Dendritic cell treated with granulocyte-macrophage colony-stimulating factor and Interleukin-4, amounts not matched to agents 40 ng/mL and 50 ng/mL, for 4 days (primary cell): ENCODE measurements at regions of chr22 and their contacts with region 1.

Region 1: DNA sequence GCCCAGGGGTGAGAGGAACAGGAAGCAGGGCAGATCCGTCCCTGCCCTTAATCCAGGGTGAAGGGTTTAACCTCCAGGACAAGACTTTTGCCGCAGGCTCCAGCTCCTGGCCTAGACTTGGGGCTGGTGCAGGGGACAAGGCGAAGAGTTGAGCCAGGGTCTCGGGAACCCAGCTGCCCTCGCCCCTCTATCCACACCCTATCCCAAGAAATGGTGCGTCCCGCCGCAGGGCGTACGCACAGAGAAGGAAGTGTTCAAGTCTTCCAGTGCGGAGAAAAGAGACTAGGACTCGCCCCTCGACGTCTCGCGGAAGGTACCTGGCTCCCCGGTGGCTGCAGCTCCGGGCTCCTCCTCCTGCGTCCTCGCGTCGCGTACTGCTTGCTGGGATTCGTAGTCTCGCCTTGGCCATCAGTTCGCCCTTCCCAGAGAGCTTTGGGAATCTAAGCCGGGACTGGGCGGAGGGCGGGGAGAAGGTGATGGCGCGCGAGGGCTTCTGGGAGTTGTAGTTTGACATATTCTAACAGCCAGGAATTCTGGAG is at the start of gene ZMAT5:
- H3K4me3 Mint-ChIP-seq: peak within 1 kb of the TSS; percentile 98
- H3K27ac Mint-ChIP-seq: peak within 1 kb of the TSS; percentile 96
- H3K4me1 Mint-ChIP-seq: peaks cover 36% of the 10 kb centered on the region
- H3K27me3 Mint-ChIP-seq: no peaks in the 10 kb centered on the region

Region 2: DNA sequence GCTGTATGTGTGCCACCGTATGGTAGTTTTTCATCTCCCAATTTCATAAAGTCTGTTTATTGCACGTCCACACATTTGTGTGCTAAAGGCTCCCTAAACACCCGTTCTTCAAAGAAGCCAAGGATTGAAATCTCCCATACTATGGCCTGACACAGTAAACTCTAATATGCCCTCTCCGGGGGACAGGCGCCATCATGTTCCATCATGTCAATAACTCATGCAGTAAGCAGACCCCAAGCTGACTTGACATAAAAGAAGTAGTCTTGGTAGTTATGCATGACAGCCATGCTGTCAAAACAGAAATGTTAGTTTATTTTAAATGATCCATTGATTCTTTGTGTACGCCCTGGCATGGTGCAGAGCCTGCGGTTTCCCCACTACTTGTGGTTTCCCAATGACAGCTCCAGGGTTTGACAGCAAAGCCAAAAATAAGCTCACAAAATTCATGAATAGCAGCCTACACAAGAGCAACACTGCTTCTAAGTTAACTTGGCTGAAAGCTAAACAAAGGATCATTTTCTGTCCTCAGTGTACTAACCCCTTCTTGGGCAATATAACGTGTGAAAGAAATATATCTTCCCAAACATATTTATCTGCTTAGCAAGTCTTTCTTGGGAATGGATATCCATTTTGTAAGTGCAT is 103.4 kb before region 1 on chr22:
- intact Hi-C with region 1: no loop called
- H3K4me3 Mint-ChIP-seq: no peak overlapping the region
- H3K27ac Mint-ChIP-seq: no peak overlapping the region
- H3K4me1 Mint-ChIP-seq: peaks cover 5% of the 10 kb centered on the region
- H3K27me3 Mint-ChIP-seq: no peaks in the 10 kb centered on the region

Region 3: DNA sequence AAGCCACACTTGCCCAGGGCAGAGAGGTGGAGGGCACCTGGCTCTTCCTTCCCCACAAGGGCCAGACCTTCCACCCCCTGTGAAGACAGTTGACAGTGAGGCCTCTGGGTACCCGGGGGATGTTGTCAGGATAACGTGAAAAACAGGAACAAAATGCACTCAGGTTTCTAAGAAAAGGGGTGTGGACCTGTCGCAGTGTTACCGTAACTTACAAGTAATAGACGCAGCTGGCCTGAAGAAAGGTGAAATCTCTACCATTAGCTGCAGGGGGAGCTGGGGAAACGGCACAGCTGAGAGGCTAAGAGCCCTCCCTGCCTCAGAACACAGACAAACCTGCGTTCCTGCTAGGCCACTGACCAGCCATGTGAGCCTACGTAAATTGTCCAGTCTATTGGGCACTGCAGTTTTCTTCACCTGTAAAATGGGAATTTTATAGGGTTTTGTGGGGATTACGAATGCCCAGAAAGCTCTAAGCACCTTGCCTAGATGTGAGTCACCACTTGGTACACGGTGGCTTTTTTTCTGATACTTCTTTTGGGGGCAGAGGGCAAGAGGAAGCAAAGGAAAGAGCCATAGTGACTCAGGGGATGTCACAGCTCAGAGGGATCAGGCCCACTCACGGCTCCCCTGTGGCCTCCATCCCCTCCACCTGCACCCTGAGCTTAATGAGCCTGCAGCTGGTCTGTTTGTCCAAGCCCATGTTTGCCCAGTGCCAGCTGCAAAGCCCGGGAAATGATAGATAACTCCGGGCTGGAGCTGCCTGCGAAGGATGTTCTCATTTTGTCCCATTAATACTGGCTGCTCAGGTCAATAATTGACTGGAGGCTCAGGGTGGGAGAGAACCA is 65.3 kb before region 1 on chr22:
- intact Hi-C with region 1: no loop called
- H3K4me3 Mint-ChIP-seq: no peak overlapping the region
- H3K27ac Mint-ChIP-seq: no peak overlapping the region
- H3K4me1 Mint-ChIP-seq: peaks cover 17% of the 10 kb centered on the region
- H3K27me3 Mint-ChIP-seq: peaks cover 29% of the 10 kb centered on the region

Region 4: DNA sequence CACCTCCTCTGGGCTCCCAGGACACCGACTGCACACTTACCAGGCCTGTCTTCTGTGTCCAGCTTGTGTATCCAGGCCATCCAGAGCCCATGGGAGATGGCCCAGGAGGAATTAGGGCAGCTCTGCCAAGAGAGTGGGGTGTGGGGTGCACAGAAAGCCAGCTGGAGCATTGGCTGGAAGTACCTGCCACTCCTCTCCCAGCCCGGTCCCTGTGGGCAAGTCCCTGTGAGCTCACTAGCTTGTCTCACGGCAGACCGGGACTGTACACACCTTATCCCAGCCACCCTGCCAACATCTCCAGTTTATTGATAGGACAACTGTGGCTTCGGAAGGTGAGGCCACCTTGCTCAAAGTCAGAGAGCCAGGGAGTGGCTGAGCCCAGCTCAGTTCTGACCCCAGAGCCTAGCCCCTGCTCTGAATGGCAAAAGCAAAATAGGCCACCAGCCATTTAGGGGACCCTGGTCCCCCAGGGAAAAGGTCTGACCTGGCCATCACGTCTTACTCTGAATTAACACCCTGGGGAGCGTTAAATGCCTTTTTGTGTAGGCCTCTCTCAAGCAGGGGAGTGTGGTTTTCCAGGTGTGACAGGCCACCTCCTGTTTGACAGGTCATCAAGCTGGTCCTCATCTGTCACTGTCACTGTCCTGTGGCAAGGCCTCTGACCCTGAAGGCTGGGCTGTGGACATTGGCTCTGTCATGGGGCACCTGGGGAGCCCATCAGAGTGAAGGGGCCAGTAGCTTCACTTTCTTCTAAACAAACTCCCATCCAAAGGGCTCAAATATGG is 15.6 kb after region 1 on chr22:
- intact Hi-C with region 1: no loop called
- H3K4me3 Mint-ChIP-seq: no peak overlapping the region
- H3K27ac Mint-ChIP-seq: peak overlapping the region; percentile 3
- H3K4me1 Mint-ChIP-seq: peaks cover 9% of the 10 kb centered on the region
- H3K27me3 Mint-ChIP-seq: no peaks in the 10 kb centered on the region

Region 5: DNA sequence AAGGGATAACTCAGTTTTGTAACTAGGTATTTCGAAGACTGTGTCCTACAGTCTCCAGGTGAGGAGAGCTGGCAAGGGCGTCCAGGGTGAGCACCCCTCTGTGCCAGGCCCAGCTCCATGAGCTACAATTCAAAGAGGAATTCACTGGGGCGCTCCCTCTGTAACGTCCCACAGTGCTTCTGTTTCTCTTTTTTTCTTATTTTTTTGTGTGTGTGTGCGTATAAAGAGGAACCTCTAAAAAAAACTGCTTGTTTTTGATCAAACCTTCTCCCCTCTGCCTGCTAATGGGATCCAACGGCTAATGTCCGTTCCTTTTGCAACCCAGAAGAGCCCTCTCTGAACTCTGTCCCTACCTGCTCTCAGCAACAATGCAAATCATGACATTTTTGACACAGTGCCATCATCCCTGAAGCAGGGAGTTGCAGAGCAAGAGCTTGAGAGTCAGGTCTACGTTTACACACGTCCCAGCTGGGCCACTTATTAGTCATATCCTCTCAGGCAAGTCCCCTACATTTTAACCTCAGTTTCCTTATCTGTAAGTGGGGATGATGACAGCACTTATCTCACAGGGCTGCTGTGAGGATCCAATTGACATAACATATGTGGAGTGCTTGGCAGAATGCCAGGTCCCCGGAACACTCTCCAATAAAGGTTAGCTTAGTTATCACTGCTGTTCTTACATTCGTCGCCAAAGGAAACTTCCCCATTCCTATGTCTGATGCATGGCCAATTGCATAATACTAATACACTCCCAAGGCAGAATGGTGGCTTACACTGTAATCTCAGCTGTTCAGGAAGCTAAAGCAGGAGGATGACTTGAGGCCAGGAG is 54.5 kb after region 1 on chr22:
- intact Hi-C with region 1: loop called (anchors 10 kb)
- H3K4me3 Mint-ChIP-seq: peak overlapping the region; percentile 61
- H3K27ac Mint-ChIP-seq: peak overlapping the region; percentile 88
- H3K4me1 Mint-ChIP-seq: peaks cover 27% of the 10 kb centered on the region
- H3K27me3 Mint-ChIP-seq: no peaks in the 10 kb centered on the region

Region 6: GRCh38 chr22:29842740-29843139 is 76.0 kb after region 1 on chr22:
- intact Hi-C with region 1: loop called (anchors 5 kb)
- H3K4me3 Mint-ChIP-seq: no peak overlapping the region
- H3K27ac Mint-ChIP-seq: no peak overlapping the region
- H3K4me1 Mint-ChIP-seq: peaks cover 9% of the 10 kb centered on the region
- H3K27me3 Mint-ChIP-seq: no peaks in the 10 kb centered on the region